Panc1 (cell line): ENCODE measurements at regions of chr17 and their contacts with region 1.

Region 1: DNA sequence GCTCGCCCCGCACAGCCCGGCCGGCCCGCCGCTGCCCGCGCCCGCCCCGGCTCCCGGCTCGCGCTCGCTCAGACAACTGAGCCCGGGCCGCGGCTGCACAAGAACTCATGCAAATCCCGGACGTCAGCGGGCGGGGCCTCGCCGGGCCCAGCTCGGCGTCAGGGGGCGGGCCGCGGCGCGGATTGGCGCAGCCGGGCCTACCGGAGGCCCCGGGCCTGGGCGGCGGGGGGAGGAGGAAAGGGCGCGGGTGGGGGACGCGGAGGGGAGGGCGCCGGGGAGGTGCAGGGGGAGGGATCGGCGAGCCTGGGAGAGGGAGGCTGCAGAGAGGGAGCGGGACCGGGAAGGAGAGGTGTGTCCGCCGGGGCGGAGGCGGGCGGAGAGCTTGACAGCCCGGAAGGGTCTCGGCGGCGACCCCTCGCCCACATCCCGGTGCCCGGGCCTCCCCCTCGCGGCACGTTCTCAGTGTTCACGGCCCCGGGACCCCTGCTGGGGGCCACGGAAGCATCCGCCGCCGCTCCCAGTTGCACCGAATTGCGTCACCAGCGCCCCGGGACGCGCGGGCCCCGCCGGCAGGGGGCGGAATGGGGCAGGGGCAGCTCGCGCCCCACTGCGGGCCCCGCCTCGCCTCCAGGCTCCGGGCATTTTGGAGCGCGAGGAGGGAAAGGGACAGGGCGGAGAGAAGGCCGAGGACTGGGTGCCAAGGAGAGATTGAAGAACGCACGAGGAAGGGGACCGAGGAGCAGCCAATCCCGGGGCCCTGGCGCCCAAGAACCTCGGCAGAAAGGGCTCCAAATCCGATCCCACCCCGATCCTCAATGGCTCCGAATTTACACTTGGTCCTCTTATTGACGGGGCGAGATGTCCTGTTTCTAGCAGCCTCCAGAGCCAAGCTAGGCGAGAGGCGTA is at the start of gene CBX4:
- DNase-seq: no peak
- ATAC-seq: peak; percentile 74
- H3K4me3 ChIP-seq: peak within 1 kb of the TSS; percentile 65 to 97
- H3K27ac ChIP-seq: peak within 1 kb of the TSS; percentile 86
- H3K4me1 ChIP-seq: peaks cover 39% of the 10 kb centered on the region
- H3K27me3 ChIP-seq: no peaks in the 10 kb centered on the region
- CTCF ChIP-seq: peak; percentile 95
- total RNA-seq, gene CBX4: 48.6 TPM

Region 2: GRCh38 chr17:79777116-79777893 is 62.3 kb before region 1 on chr17:
- CTCF ChIA-PET with region 1: interaction called, 11 read pairs
- POLR2A ChIA-PET with region 1: interaction called, 3 read pairs
- in situ Hi-C with region 1: no loop called
- intact Hi-C with region 1: no loop called
- DNase-seq: no peak
- ATAC-seq: peak; percentile 73
- H3K4me3 ChIP-seq: peak overlapping the region; percentile 60 to 62
- H3K27ac ChIP-seq: peak overlapping the region; percentile 57; the same call in 1 of the 2 replicates
- H3K4me1 ChIP-seq: peaks cover 20% of the 10 kb centered on the region
- H3K27me3 ChIP-seq: peaks cover 18% of the 10 kb centered on the region
- CTCF ChIP-seq: no peak

Region 3: GRCh38 chr17:79810130-79811010 is 29.2 kb before region 1 on chr17:
- CTCF ChIA-PET with region 1: interaction called, 12 read pairs
- POLR2A ChIA-PET with region 1: interaction called, 8 read pairs
- in situ Hi-C with region 1: no loop called
- intact Hi-C with region 1: loop called (anchors 1 kb)
- DNase-seq: no peak
- ATAC-seq: peak; percentile 79
- H3K4me3 ChIP-seq: peak overlapping the region; percentile 43 to 46
- H3K27ac ChIP-seq: no peak overlapping the region
- H3K4me1 ChIP-seq: peaks cover 28% of the 10 kb centered on the region
- H3K27me3 ChIP-seq: no peaks in the 10 kb centered on the region
- CTCF ChIP-seq: no peak

Region 4: DNA sequence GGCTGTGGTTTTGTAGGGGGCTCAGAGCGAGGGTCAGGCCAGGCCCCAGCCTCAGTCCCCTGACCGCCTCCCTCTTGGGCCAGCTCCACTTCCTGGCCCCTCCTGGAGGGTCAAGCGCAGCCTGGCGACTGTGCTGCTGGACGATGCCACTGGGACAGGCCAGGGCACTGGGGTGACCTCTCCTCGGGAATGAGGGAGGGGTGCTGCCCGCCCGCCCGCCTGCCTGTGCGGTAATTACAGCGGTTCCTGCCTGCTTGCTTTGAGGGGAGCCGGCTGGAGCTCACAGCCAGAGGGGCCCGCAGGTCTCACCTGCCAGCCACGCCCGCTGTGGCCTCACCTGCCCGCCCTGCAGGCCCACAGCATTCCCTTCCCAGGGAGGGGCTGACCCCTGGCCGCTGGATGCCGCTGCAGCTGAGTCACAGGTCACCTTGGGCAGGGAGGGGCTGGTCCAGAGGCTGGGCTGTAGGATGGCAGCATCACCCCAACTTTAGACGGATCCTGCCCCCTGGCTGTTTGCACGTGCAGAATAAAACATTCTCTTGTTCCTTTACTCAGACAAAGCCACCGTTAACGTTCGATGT is 76.3 kb after region 1 on chr17:
- CTCF ChIA-PET with region 1: interaction called, 3 read pairs
- POLR2A ChIA-PET with region 1: no interaction called
- in situ Hi-C with region 1: no loop called
- intact Hi-C with region 1: loop called (anchors 10 kb)
- DNase-seq: no peak
- ATAC-seq: no peak
- H3K4me3 ChIP-seq: no peak overlapping the region
- H3K27ac ChIP-seq: no peak overlapping the region
- H3K4me1 ChIP-seq: peaks cover 26% of the 10 kb centered on the region
- H3K27me3 ChIP-seq: no peaks in the 10 kb centered on the region
- CTCF ChIP-seq: no peak

Region 5: GRCh38 chr17:80065478-80066170 is 226.0 kb after region 1 on chr17:
- CTCF ChIA-PET with region 1: no interaction called
- POLR2A ChIA-PET with region 1: no interaction called
- in situ Hi-C with region 1: no loop called
- intact Hi-C with region 1: no loop called
- DNase-seq: no peak
- ATAC-seq: no peak
- H3K4me3 ChIP-seq: no peak overlapping the region
- H3K27ac ChIP-seq: peak overlapping the region; percentile 31; the same call in 1 of the 2 replicates
- H3K4me1 ChIP-seq: peaks cover 38% of the 10 kb centered on the region
- H3K27me3 ChIP-seq: no peaks in the 10 kb centered on the region
- CTCF ChIP-seq: no peak